B cell (primary cell): ENCODE measurements at regions of chr1 and their contacts with region 1.

Region 1: GRCh38 chr1:171485375-171486047 is at the start of gene PRRC2C:
- DNase-seq: peak; percentile 97
- ATAC-seq: peak; percentile 92
- H3K4me3 ChIP-seq: peak within 1 kb of the TSS; percentile 97 to 100 (median 99)
- H3K4me3 Mint-ChIP-seq: peak within 1 kb of the TSS; percentile 93
- H3K27ac ChIP-seq: peak within 1 kb of the TSS; percentile 99 to 100
- H3K27ac Mint-ChIP-seq: peak within 1 kb of the TSS; percentile 94
- H3K4me1 ChIP-seq: peaks cover 25 to 47% of the 10 kb centered on the region in 2 donors
- H3K4me1 Mint-ChIP-seq: peaks cover 47% of the 10 kb centered on the region
- H3K27me3 ChIP-seq: no peaks in the 10 kb centered on the region
- H3K27me3 Mint-ChIP-seq: no peaks in the 10 kb centered on the region
- CTCF ChIP-seq: peak; percentile 83
- total RNA-seq, gene PRRC2C: 300 and 305 TPM in 2 replicates

Region 2: GRCh38 chr1:169485544-169486278 is 1999.8 kb before region 1 on chr1 and contains the start of gene SLC19A2:
- CTCF ChIA-PET with region 1: no interaction called
- POLR2A ChIA-PET with region 1: no interaction called
- intact Hi-C with region 1: loop called (anchors 5 kb)
- DNase-seq: peak; percentile 96
- ATAC-seq: peak; percentile 98
- H3K4me3 ChIP-seq: peak within 1 kb of the TSS; percentile 68 to 82 (median 74)
- H3K4me3 Mint-ChIP-seq: peak within 1 kb of the TSS; percentile 94
- H3K27ac ChIP-seq: peak within 1 kb of the TSS; percentile 62 to 82
- H3K27ac Mint-ChIP-seq: peak within 1 kb of the TSS; percentile 93
- H3K4me1 ChIP-seq: peaks cover 16 to 18% of the 10 kb centered on the region in 2 donors
- H3K4me1 Mint-ChIP-seq: peaks cover 28% of the 10 kb centered on the region
- H3K27me3 ChIP-seq: peaks cover 0 to 3% (median 0%) of the 10 kb centered on the region in 4 experiments
- H3K27me3 Mint-ChIP-seq: peaks cover 4% of the 10 kb centered on the region
- CTCF ChIP-seq: peak; percentile 44
- total RNA-seq, gene SLC19A2: 3.9 TPM in 2 replicates

Region 3: DNA sequence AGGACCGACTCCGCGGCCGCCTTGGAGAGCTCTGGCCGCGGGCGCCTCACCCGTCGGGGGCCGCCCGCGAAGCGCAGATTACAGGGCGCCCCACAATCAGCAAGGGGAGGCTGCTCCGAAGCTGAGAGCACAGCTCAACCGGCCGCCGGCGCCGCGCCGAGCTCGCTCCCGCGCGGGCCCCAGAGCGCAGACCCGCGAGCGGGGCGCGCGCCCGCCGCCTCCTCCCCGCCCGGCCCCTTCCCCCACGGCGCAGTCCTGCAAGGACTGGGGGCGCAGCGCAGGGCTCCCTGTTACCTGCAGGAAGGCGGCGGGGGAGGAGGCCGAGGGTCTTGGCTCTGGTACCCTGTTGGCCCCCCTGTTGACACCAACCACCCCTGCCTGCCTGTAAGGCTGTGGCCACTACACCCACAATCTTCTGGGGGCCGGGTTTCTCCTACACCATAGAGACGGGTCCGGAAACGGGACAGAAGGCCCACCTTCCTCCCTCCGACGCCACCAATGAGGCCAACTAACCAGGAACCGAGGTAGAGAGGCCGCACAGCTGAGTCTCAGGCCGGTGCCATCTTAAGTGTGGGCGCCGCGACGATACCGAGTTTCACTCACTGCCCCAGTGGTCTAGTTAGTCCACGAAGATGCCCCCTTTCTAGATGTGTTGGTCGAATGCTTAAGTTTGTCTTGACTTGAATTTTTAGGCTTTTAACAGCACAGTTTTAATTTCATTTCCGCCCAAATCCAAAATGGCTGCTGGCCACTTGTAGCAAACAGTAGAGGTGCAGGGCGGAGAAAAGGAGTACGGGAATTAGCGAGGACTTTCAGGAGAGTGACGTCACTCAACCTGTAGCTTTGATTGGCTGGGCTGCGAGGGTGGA is 1591.8 kb before region 1 on chr1 and contains the start of gene SCYL3:
- CTCF ChIA-PET with region 1: no interaction called
- POLR2A ChIA-PET with region 1: no interaction called
- intact Hi-C with region 1: loop called (anchors 1 kb)
- DNase-seq: peak; percentile 99
- ATAC-seq: peak; percentile 88
- H3K4me3 ChIP-seq: peak within 1 kb of the TSS; percentile 81 to 96 (median 85)
- H3K4me3 Mint-ChIP-seq: peak within 1 kb of the TSS; percentile 98
- H3K27ac ChIP-seq: peak within 1 kb of the TSS; percentile 97
- H3K27ac Mint-ChIP-seq: peak within 1 kb of the TSS; percentile 100
- H3K4me1 ChIP-seq: peaks cover 25 to 32% of the 10 kb centered on the region in 2 donors
- H3K4me1 Mint-ChIP-seq: peaks cover 44% of the 10 kb centered on the region
- H3K27me3 ChIP-seq: peaks cover 0 to 3% (median under 1%) of the 10 kb centered on the region in 4 experiments
- H3K27me3 Mint-ChIP-seq: peaks cover 15% of the 10 kb centered on the region
- CTCF ChIP-seq: no peak
- total RNA-seq, gene SCYL3: 17.6 and 18.4 TPM in 2 replicates

Region 4: GRCh38 chr1:170531758-170532657 is 953.5 kb before region 1 on chr1 and contains the start of gene GORAB:
- CTCF ChIA-PET with region 1: no interaction called
- POLR2A ChIA-PET with region 1: no interaction called
- intact Hi-C with region 1: loop called (anchors 5 kb)
- DNase-seq: peak; percentile 91
- ATAC-seq: peak; percentile 97
- H3K4me3 ChIP-seq: peak within 1 kb of the TSS; percentile 72 to 95 (median 89)
- H3K4me3 Mint-ChIP-seq: no peak within 1 kb of the TSS
- H3K27ac ChIP-seq: peak within 1 kb of the TSS; percentile 82 to 92
- H3K27ac Mint-ChIP-seq: no peak within 1 kb of the TSS
- H3K4me1 ChIP-seq: peaks cover 12 to 17% of the 10 kb centered on the region in 2 donors
- H3K4me1 Mint-ChIP-seq: peaks cover 13% of the 10 kb centered on the region
- H3K27me3 ChIP-seq: no peaks in the 10 kb centered on the region
- H3K27me3 Mint-ChIP-seq: no peaks in the 10 kb centered on the region
- CTCF ChIP-seq: no peak
- total RNA-seq, gene GORAB: 24.2 and 32.5 TPM in 2 replicates

Region 5: GRCh38 chr1:171509191-171509590 is 23.7 kb after region 1 on chr1:
- CTCF ChIA-PET with region 1: interaction called, 3 read pairs
- POLR2A ChIA-PET with region 1: no interaction called
- intact Hi-C with region 1: loop called (anchors 2 kb)
- DNase-seq: no peak
- ATAC-seq: no peak
- H3K4me3 ChIP-seq: no peak overlapping the region
- H3K4me3 Mint-ChIP-seq: peak overlapping the region; percentile 12
- H3K27ac ChIP-seq: no peak overlapping the region
- H3K27ac Mint-ChIP-seq: no peak overlapping the region
- H3K4me1 ChIP-seq: peaks cover 15 to 33% of the 10 kb centered on the region in 2 donors
- H3K4me1 Mint-ChIP-seq: peaks cover 70% of the 10 kb centered on the region
- H3K27me3 ChIP-seq: no peaks in the 10 kb centered on the region
- H3K27me3 Mint-ChIP-seq: no peaks in the 10 kb centered on the region
- CTCF ChIP-seq: no peak

Region 6: GRCh38 chr1:171754353-171754705 is 268.8 kb after region 1 on chr1:
- CTCF ChIA-PET with region 1: no interaction called
- POLR2A ChIA-PET with region 1: no interaction called
- intact Hi-C with region 1: no loop called
- DNase-seq: no peak
- ATAC-seq: no peak
- H3K4me3 ChIP-seq: no peak overlapping the region
- H3K4me3 Mint-ChIP-seq: no peak overlapping the region
- H3K27ac ChIP-seq: no peak overlapping the region
- H3K27ac Mint-ChIP-seq: no peak overlapping the region
- H3K4me1 ChIP-seq: no peaks in the 10 kb centered on the region
- H3K4me1 Mint-ChIP-seq: no peaks in the 10 kb centered on the region
- H3K27me3 ChIP-seq: peaks cover 0 to 5% (median 0%) of the 10 kb centered on the region in 4 experiments
- H3K27me3 Mint-ChIP-seq: peaks cover 33% of the 10 kb centered on the region
- CTCF ChIP-seq: no peak

Region 7: GRCh38 chr1:171841050-171841940 is 355.8 kb after region 1 on chr1 and contains the start of gene DNM3:
- CTCF ChIA-PET with region 1: no interaction called
- POLR2A ChIA-PET with region 1: no interaction called
- intact Hi-C with region 1: loop called (anchors 1 kb)
- DNase-seq: peak; percentile 88
- ATAC-seq: peak; percentile 93
- H3K4me3 ChIP-seq: peak within 1 kb of the TSS; percentile 50 to 86 (median 73)
- H3K4me3 Mint-ChIP-seq: peak within 1 kb of the TSS; percentile 86
- H3K27ac ChIP-seq: no peak within 1 kb of the TSS
- H3K27ac Mint-ChIP-seq: peak within 1 kb of the TSS; percentile 72
- H3K4me1 ChIP-seq: peaks cover 11 to 21% of the 10 kb centered on the region in 2 donors
- H3K4me1 Mint-ChIP-seq: peaks cover 17% of the 10 kb centered on the region
- H3K27me3 ChIP-seq: peaks cover 0 to 25% (median 17%) of the 10 kb centered on the region in 4 experiments
- H3K27me3 Mint-ChIP-seq: peaks cover 23% of the 10 kb centered on the region
- CTCF ChIP-seq: no peak
- total RNA-seq, gene DNM3: 1.3 and 1.5 TPM in 2 replicates